Activated CD4-positive, alpha-beta T cell treated with anti-CD3 and anti-CD28 coated beads for 36 hours (primary cell): ENCODE measurements at regions of chr15 and their contacts with region 1.

Region 1: GRCh38 chr15:69755551-69756310 is 303.1 kb downstream of the RPLP1 start:
- DNase-seq: peak; percentile 91
- ATAC-seq: peak; percentile 67
- H3K4me3 Mint-ChIP-seq: peak overlapping the region; percentile 40
- H3K27ac Mint-ChIP-seq: peak overlapping the region; percentile 93
- H3K4me1 Mint-ChIP-seq: peaks cover 94% of the 10 kb centered on the region
- H3K27me3 Mint-ChIP-seq: peaks cover 9% of the 10 kb centered on the region

Region 2: DNA sequence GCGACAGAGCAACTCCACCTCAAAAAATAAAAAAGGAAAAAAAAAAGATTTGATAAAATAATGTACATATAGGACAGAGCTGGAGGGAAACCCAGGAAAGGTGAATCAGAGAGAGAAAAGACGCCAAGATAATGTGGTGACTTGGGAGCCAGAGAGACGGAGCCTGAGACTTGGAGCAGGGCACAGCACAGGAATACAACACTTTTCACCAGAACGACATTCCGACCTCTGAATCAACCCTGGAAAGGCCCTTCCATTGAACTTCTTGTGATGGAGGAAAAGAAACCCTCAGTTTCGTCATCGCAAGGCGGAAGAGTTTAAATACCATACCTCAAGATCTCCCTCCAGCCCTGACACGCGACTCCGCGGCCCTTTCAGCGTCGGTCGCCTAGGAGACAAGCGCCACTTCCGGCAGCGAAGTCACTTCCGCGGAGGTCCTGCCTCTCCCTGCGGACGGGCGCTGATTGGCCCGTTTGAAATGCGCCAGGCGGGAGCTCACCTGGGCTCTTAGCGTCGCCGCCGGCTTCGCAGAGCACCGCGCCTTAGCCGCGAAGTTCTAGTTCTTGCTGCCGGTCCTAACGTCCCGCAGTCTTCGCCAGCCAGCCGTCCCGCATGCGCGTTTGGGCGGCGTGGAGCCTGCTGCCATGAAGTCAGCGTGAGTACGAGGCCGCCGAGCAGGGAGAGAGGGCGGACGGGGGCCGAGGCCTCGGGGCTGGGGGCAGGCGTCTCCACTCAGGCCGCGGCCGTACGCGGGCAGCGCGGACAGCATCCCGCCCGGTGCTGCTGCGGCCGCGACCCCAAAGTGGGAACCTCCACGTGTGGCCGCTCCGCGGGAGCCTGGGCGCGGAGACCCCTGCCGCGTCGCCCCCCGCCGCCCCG is 341.7 kb before region 1 on chr15 and contains the start of gene KIF23:
- CTCF ChIA-PET with region 1: no interaction called
- POLR2A ChIA-PET with region 1: no interaction called
- intact Hi-C with region 1: loop called in 1 of 2 experiments (anchors 5 kb)
- DNase-seq: peak; percentile 96
- ATAC-seq: peak; percentile 95
- H3K4me3 Mint-ChIP-seq: peak within 1 kb of the TSS; percentile 85
- H3K27ac Mint-ChIP-seq: peak within 1 kb of the TSS; percentile 69
- H3K4me1 Mint-ChIP-seq: peaks cover 13% of the 10 kb centered on the region
- H3K27me3 Mint-ChIP-seq: peaks cover 5% of the 10 kb centered on the region
- total RNA-seq, gene KIF23: 47.2 to 48.0 TPM

Region 3: GRCh38 chr15:69576035-69576526 is 179.7 kb before region 1 on chr15:
- CTCF ChIA-PET with region 1: no interaction called
- POLR2A ChIA-PET with region 1: no interaction called
- intact Hi-C with region 1: loop called (anchors 1 to 5 kb)
- DNase-seq: peak; percentile 85
- ATAC-seq: peak; percentile 59
- H3K4me3 Mint-ChIP-seq: no peak overlapping the region
- H3K27ac Mint-ChIP-seq: peak overlapping the region; percentile 16
- H3K4me1 Mint-ChIP-seq: peaks cover 37% of the 10 kb centered on the region
- H3K27me3 Mint-ChIP-seq: no peaks in the 10 kb centered on the region

Region 4: DNA sequence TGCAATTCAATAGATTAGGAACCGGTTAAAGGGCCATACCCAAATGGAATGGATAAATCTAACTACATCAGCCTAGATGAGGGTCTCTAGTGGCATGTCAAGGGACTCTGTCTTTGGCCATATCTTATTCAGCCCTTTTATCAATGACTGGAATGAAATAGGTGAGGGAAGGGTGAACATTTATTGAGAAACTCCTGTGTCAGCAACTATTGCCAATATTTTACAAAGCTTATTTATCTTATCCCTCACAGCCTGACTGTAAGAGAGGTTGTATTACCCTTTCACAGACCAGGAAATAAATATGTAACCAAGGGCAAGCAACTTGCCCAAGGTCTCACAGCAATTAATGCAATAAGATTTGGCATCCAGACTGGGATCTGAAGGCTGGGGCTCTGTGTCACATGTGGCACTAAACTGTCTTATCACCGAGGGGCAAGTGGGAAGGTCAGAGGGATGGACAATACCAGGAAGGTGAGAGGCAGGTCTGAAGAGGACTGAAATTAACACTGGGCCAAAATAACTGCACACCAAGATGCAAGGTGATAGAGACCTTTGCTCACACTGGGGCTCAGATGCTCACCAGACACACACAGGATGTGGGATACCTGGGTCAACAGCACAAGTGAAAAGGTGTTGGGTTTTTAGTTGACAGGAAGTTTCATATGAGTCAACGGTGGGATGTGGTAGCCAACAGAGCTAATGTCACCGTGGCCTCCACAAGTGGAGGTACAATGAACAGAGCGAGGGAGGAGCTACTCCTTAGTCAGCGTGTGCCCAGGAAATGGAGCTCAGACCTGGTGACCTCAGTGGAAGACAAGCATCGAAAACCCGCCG is 41.8 kb before region 1 on chr15:
- CTCF ChIA-PET with region 1: interaction called, 9 read pairs
- POLR2A ChIA-PET with region 1: interaction called, 12 read pairs
- intact Hi-C with region 1: loop called in 1 of 2 experiments (anchors 1 kb)
- DNase-seq: peak; percentile 85
- ATAC-seq: peak; percentile 96
- H3K4me3 Mint-ChIP-seq: peak overlapping the region; percentile 21
- H3K27ac Mint-ChIP-seq: peak overlapping the region; percentile 85
- H3K4me1 Mint-ChIP-seq: peaks cover 60% of the 10 kb centered on the region
- H3K27me3 Mint-ChIP-seq: peaks cover 7% of the 10 kb centered on the region

Region 5: GRCh38 chr15:70062321-70062956 is 306.7 kb after region 1 on chr15:
- CTCF ChIA-PET with region 1: no interaction called
- POLR2A ChIA-PET with region 1: no interaction called
- intact Hi-C with region 1: no loop called
- DNase-seq: no peak
- ATAC-seq: no peak
- H3K4me3 Mint-ChIP-seq: no peak overlapping the region
- H3K27ac Mint-ChIP-seq: no peak overlapping the region
- H3K4me1 Mint-ChIP-seq: no peaks in the 10 kb centered on the region
- H3K27me3 Mint-ChIP-seq: no peaks in the 10 kb centered on the region

Region 6: GRCh38 chr15:70259028-70259424 is 503.3 kb after region 1 on chr15:
- CTCF ChIA-PET with region 1: no interaction called
- POLR2A ChIA-PET with region 1: no interaction called
- intact Hi-C with region 1: loop called (anchors 5 to 10 kb)
- DNase-seq: peak; percentile 54
- ATAC-seq: peak; percentile 17
- H3K4me3 Mint-ChIP-seq: peak overlapping the region; percentile 15
- H3K27ac Mint-ChIP-seq: peak overlapping the region; percentile 57
- H3K4me1 Mint-ChIP-seq: peaks cover 32% of the 10 kb centered on the region
- H3K27me3 Mint-ChIP-seq: peaks cover 3% of the 10 kb centered on the region

Region 7: DNA sequence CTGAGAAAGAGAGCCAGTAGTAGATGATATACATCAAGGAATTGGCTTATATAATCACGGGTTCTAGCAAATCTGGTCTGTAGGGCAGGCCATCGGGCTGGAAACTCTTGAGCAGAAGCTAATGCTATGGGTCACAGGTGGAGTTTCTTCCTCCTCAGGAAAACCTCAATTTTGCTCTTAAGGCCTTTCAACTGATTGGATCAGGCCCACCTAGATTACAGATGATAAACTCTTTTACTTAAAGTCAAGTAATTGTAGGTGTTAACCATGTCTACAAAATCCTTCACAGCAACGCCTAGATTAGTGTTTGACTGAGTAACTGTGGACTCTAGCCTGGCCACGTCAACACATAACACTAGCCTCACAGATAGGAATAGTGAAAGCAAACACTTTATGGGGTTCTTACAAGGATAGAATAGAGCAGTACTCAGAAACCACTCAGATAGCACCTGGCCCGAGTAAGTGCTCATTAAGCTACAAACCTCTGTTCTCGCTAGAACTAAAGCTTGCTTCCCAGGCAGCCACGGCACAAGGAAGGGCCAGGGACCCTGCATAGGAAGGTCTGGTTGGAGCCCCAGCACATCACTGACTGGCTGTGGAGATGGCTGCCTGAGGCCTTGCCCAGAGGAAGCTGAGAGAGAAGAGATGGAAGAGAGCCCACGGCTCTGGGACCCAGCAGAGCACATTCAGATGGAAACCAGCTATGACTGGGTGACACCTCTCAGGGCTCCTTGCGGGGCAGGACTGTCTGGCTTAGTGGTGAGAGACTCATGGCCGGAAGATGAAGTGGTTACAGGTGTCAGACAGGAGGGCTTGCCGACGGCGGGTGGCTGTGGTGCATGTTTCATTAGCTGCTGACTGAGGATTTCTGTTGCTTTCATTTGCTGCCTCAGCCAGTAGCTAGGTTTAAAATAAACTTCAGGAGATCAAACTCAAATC is 544.5 kb after region 1 on chr15:
- CTCF ChIA-PET with region 1: no interaction called
- POLR2A ChIA-PET with region 1: no interaction called
- intact Hi-C with region 1: loop called in 1 of 2 experiments (anchors 5 kb)
- DNase-seq: peak; percentile 89
- ATAC-seq: peak; percentile 100
- H3K4me3 Mint-ChIP-seq: no peak overlapping the region
- H3K27ac Mint-ChIP-seq: no peak overlapping the region
- H3K4me1 Mint-ChIP-seq: peaks cover 11% of the 10 kb centered on the region
- H3K27me3 Mint-ChIP-seq: no peaks in the 10 kb centered on the region